ENCODE measurements at regions of chr17 and their contacts with region 1.

Region 1: GRCh38 chr17:18314731-18315561 is at the starts of genes SMCR8 and TOP3A:
- DNase-seq: peak; percentile 99
- ATAC-seq: peak; percentile 95
- H3K4me3 Mint-ChIP-seq: peak within 1 kb of the TSS; percentile 85
- H3K27ac Mint-ChIP-seq: peak within 1 kb of the TSS; percentile 100
- H3K4me1 Mint-ChIP-seq: peaks cover 71% of the 10 kb centered on the region
- H3K27me3 Mint-ChIP-seq: no peaks in the 10 kb centered on the region
- total RNA-seq, gene SMCR8: 13.2 to 14.5 TPM
- total RNA-seq, gene TOP3A: 44.1 to 57.9 TPM

Region 2: GRCh38 chr17:18087610-18088491 is 227.1 kb before region 1 on chr17 and contains the start of gene DRG2:
- CTCF ChIA-PET with region 1: no interaction called
- POLR2A ChIA-PET with region 1: no interaction called
- intact Hi-C with region 1: loop called in 1 of 2 experiments (anchors 1 kb)
- DNase-seq: peak; percentile 93
- ATAC-seq: peak; percentile 90
- H3K4me3 Mint-ChIP-seq: peak within 1 kb of the TSS; percentile 99
- H3K27ac Mint-ChIP-seq: peak within 1 kb of the TSS; percentile 98
- H3K4me1 Mint-ChIP-seq: peaks cover 22% of the 10 kb centered on the region
- H3K27me3 Mint-ChIP-seq: no peaks in the 10 kb centered on the region
- total RNA-seq, gene DRG2: 42.5 to 45.6 TPM

Region 3: GRCh38 chr17:18225121-18225566 is 89.8 kb before region 1 on chr17:
- CTCF ChIA-PET with region 1: no interaction called
- POLR2A ChIA-PET with region 1: no interaction called
- intact Hi-C with region 1: loop called (anchors 1 kb)
- DNase-seq: peak; percentile 99
- ATAC-seq: peak; percentile 98
- H3K4me3 Mint-ChIP-seq: peak overlapping the region; percentile 56
- H3K27ac Mint-ChIP-seq: peak overlapping the region; percentile 55
- H3K4me1 Mint-ChIP-seq: peaks cover 18% of the 10 kb centered on the region
- H3K27me3 Mint-ChIP-seq: no peaks in the 10 kb centered on the region

Region 4: GRCh38 chr17:18260332-18261144 is 54.4 kb before region 1 on chr17 and contains the start of gene MIEF2:
- CTCF ChIA-PET with region 1: interaction called, 3 read pairs
- POLR2A ChIA-PET with region 1: no interaction called
- intact Hi-C with region 1: loop called (anchors 1 to 2 kb)
- DNase-seq: peak; percentile 96
- ATAC-seq: peak; percentile 92
- H3K4me3 Mint-ChIP-seq: peak within 1 kb of the TSS; percentile 76
- H3K27ac Mint-ChIP-seq: peak within 1 kb of the TSS; percentile 80
- H3K4me1 Mint-ChIP-seq: peaks cover 42% of the 10 kb centered on the region
- H3K27me3 Mint-ChIP-seq: no peaks in the 10 kb centered on the region
- total RNA-seq, gene MIEF2: 3.3 to 5.2 TPM

Region 5: DNA sequence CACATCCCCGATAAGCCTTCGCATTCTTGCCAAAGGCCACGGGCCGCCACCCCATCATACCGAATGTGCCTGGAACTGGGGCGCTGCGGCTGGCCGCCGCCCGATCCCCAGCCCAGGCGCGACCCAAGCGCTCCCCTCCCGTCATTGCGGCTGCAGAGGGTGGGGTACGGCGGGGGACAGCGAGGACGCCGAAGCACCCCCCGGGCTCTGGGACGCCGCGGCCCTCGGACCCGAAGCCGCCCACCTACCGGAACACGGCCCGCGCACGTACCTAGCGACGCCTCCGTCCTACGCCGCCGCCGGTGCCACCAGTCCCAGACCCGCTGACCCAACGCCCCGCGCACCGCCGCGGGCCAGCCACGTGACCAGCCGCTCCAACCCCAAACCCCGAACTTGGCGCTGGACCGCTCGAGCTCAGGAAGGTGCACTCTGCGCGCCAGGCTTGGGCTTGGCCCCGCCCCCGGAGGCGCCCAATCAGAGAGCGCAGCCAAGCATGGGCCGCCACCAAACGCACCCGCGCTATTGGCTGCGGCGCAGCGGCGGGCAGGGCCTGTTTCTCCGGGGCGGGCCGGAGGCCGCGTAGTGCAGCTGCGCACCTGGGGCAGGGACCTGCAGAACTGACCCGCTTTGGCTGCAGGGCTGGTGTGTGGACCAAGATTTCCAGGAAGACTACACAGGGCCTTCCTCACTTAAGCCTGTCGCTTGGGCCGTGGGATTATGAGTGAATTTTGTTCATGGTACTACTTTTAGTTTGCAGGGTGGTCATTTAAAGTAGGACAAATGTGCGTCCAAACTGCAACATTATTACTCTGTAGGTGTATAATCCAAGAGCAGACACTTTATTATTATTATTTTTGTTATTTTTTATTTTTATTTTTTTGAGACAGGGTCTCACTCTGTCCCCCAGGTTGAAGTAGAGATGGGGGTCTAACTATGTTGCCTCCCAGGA is 48.4 kb after region 1 on chr17 and contains the start of gene SHMT1:
- CTCF ChIA-PET with region 1: no interaction called
- POLR2A ChIA-PET with region 1: interaction called, 9 read pairs
- intact Hi-C with region 1: loop called (anchors 1 to 5 kb)
- DNase-seq: peak; percentile 95
- ATAC-seq: peak; percentile 100
- H3K4me3 Mint-ChIP-seq: peak within 1 kb of the TSS; percentile 87
- H3K27ac Mint-ChIP-seq: peak within 1 kb of the TSS; percentile 66
- H3K4me1 Mint-ChIP-seq: peaks cover 12% of the 10 kb centered on the region
- H3K27me3 Mint-ChIP-seq: no peaks in the 10 kb centered on the region
- total RNA-seq, gene SHMT1: 58.7 to 61.0 TPM

Region 6: GRCh38 chr17:18382441-18383078 is 67.6 kb after region 1 on chr17:
- CTCF ChIA-PET with region 1: no interaction called
- POLR2A ChIA-PET with region 1: no interaction called
- intact Hi-C with region 1: loop called in 1 of 2 experiments (anchors 2 kb)
- DNase-seq: no peak
- ATAC-seq: no peak
- H3K4me3 Mint-ChIP-seq: no peak overlapping the region
- H3K27ac Mint-ChIP-seq: no peak overlapping the region
- H3K4me1 Mint-ChIP-seq: no peaks in the 10 kb centered on the region
- H3K27me3 Mint-ChIP-seq: peaks cover 8% of the 10 kb centered on the region